ENCODE measurements at regions of chr15 and their contacts with region 1.

Region 1: DNA sequence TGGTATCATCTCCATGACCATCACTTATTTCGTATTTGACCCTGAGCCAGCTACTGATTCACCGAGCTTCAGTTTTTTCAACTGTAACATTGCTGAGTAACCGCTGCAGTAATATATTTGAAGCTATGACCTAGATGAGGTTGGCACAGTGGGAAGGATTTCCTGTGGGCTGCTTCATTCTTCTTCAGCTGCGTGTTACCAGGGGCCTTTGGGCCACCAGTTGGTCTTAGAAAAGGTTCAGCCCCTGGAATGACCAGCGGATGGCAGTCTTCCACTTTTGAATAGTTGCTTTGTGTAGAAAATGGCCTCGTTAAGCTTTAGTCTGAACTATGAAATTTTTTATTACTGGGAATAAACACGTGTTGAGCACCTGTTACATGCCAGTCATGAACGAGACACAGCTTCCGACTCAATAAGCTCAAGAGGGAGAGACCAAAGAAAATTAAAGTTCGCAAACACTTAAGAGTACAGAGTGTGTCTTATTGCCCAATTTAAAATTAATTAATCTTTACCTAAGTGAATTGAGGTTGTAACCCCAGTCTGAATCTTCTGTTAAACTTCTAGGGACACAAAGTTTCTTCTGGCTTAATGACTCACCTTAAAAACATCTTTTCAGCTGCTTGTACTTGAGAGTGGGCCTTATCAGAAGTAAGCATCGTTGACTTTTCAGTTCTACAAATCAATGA is 57.6 kb upstream of the NR2E3 start:
- DNase-seq: peak; percentile 65
- ATAC-seq: peak; percentile 59
- H3K4me3 ChIP-seq: no peak overlapping the region
- H3K27ac ChIP-seq: no peak overlapping the region
- H3K4me1 ChIP-seq: peaks cover 25 to 38% of the 10 kb centered on the region in 2 experiments
- H3K27me3 ChIP-seq: no peaks in the 10 kb centered on the region
- CTCF ChIP-seq: peak; percentile 65 to 81 (median 68)
- POLR2A ChIP-seq: no peak
- RAD21 ChIP-seq: peak; percentile 76

Region 2: DNA sequence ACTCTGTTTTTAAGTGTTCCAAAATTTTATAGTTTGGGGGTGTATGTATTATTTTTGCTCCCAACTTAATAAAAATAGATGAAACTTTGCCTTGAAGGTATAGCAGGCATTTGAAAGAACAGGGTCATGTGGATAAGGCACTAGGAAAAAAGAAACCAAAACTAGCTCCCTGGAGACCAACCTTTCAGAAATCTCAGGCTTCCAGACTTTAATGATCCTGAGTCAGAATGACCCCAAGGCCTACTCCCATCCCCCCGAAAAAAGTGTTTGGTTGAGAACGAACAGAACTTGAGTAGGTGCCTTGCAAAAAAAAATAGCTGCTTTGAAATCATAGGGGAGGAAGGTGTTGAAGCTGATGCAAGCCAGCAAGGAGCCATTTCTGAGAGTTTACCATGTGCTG is 328.0 kb before region 1 on chr15:
- CTCF ChIA-PET with region 1: no interaction called
- POLR2A ChIA-PET with region 1: no interaction called
- RAD21 ChIA-PET with region 1: no interaction called
- intact Hi-C with region 1: no loop called
- DNase-seq: no peak
- ATAC-seq: no peak
- H3K4me3 ChIP-seq: no peak overlapping the region
- H3K27ac ChIP-seq: no peak overlapping the region
- H3K4me1 ChIP-seq: no peaks in the 10 kb centered on the region
- H3K27me3 ChIP-seq: no peaks in the 10 kb centered on the region
- CTCF ChIP-seq: no peak
- POLR2A ChIP-seq: no peak
- RAD21 ChIP-seq: no peak

Region 3: GRCh38 chr15:71526060-71526820 is 226.5 kb before region 1 on chr15:
- CTCF ChIA-PET with region 1: no interaction called
- POLR2A ChIA-PET with region 1: no interaction called
- RAD21 ChIA-PET with region 1: no interaction called
- intact Hi-C with region 1: no loop called
- DNase-seq: no peak
- ATAC-seq: no peak
- H3K4me3 ChIP-seq: no peak overlapping the region
- H3K27ac ChIP-seq: no peak overlapping the region
- H3K4me1 ChIP-seq: no peaks in the 10 kb centered on the region
- H3K27me3 ChIP-seq: no peaks in the 10 kb centered on the region
- CTCF ChIP-seq: no peak
- POLR2A ChIP-seq: no peak
- RAD21 ChIP-seq: no peak

Region 4: GRCh38 chr15:71734709-71735384 is 17.9 kb before region 1 on chr15:
- CTCF ChIA-PET with region 1: no interaction called
- POLR2A ChIA-PET with region 1: no interaction called
- RAD21 ChIA-PET with region 1: no interaction called
- intact Hi-C with region 1: no loop called
- DNase-seq: no peak
- ATAC-seq: no peak
- H3K4me3 ChIP-seq: no peak overlapping the region
- H3K27ac ChIP-seq: no peak overlapping the region
- H3K4me1 ChIP-seq: peaks cover 0 to 3% of the 10 kb centered on the region in 2 experiments; a peak in 1 of 4 replicates
- H3K27me3 ChIP-seq: no peaks in the 10 kb centered on the region; the same call in 1 of the 2 replicates
- CTCF ChIP-seq: no peak
- POLR2A ChIP-seq: no peak
- RAD21 ChIP-seq: no peak

Region 5: GRCh38 chr15:71792521-71792920 is 39.8 kb after region 1 on chr15:
- CTCF ChIA-PET with region 1: interaction called, 28 read pairs
- POLR2A ChIA-PET with region 1: no interaction called
- RAD21 ChIA-PET with region 1: no interaction called
- intact Hi-C with region 1: no loop called
- DNase-seq: no peak
- ATAC-seq: no peak
- H3K4me3 ChIP-seq: no peak overlapping the region
- H3K27ac ChIP-seq: no peak overlapping the region
- H3K4me1 ChIP-seq: peaks cover 30 to 33% of the 10 kb centered on the region in 2 experiments
- H3K27me3 ChIP-seq: no peaks in the 10 kb centered on the region
- CTCF ChIP-seq: no peak
- POLR2A ChIP-seq: no peak
- RAD21 ChIP-seq: no peak

Region 6: DNA sequence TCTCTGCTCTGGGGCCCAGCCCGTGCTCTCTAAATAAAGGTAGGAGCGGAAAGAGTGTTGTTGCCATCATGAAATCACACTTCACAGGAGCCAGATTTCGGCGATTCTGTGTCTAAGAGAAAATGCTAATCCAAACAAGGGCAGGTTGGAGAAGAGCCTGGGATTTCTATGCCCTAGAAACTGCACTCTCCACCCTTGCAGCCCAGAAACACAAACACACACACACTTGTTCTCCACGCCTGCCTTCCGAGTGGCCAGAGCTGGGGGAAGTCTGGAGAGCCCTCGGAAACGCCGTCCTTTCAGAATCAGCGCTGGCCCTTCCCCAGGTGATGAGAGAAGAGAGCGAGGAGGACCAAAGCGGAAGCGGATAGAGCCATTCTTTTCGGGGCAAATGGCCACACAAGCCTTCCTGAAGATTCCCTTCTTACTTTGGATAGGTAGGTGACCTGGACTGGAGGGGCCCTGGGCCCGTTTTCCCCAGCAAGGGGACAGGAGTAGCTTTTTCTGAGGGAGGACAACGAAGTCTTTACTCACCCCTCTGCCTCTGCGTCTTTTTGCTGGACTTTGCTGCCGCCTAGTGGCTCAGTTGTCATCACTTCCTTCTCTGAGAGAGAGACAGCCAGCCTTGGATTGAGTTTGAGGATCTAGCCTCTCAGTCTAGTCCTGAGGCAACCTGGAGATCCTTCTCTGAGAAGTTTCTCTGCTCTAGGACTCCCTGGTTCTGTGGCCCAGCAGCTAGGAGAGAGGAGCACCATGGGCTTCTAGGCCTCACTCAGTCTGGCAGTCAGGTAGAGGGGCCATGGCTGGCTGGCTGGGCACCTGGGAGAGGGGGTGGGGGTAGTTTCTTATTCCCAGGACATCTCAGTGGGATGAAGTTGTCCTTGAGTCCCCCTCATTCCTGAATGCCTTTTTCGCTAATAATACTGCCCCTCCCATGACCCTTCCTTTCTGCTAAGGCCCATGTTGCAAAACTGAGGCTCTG is 403.2 kb after region 1 on chr15:
- CTCF ChIA-PET with region 1: interaction called, 28 read pairs
- POLR2A ChIA-PET with region 1: no interaction called
- RAD21 ChIA-PET with region 1: interaction called, 3 to 7 read pairs
- intact Hi-C with region 1: loop called (anchors 2 kb)
- DNase-seq: peak; percentile 59
- ATAC-seq: peak; percentile 99
- H3K4me3 ChIP-seq: no peak overlapping the region
- H3K27ac ChIP-seq: no peak overlapping the region
- H3K4me1 ChIP-seq: peaks cover 4 to 12% of the 10 kb centered on the region in 2 experiments; a peak in 3 of 4 replicates
- H3K27me3 ChIP-seq: no peaks in the 10 kb centered on the region
- CTCF ChIP-seq: peak; percentile 74 to 92 (median 84); a peak in 5 of 6 replicates
- POLR2A ChIP-seq: no peak
- RAD21 ChIP-seq: peak; percentile 95

Measured in HCT116 (cell line).